ENCODE measurements at regions of chr9 and their contacts with region 1.

Region 1: GRCh38 chr9:84315278-84315877 is 25.2 kb downstream of the SLC28A3 start:
- DNase-seq: peak; percentile 59
- CTCF ChIP-seq: peak; percentile 84

Region 2: DNA sequence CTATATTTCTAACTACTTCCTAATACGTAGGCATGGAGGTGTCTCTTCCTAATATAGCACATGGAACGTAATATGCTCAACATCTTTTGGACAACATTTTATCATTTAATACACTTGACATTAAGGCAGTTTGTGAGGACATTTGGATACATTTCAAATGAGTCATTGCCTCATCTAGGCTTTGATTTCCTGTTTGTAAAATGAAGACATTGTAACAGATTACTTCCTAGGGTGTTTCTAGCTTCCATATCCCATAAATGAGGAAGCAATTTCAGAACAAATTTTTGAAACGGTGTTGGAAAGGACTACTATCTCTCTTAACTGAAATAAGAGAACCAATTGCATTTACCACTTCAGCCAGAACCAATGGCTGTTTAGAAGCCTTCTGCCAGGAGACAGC is 13.5 kb before region 1 on chr9:
- CTCF ChIA-PET with region 1: interaction called, 36 read pairs
- POLR2A ChIA-PET with region 1: no interaction called
- DNase-seq: no peak
- CTCF ChIP-seq: no peak

Measured in GM10248 (cell line).